ENCODE measurements at regions of chrX and their contacts with region 1.

Region 1: GRCh38 chrX:129540068-129540653 is at the start of gene OCRL:
- DNase-seq: no peak
- H3K4me3 ChIP-seq: peak within 1 kb of the TSS; percentile 53
- CTCF ChIP-seq: peak; percentile 68

Region 2: GRCh38 chrX:129433461-129433860 is 106.7 kb before region 1 on chrX:
- in situ Hi-C with region 1: no loop called
- DNase-seq: no peak
- H3K4me3 ChIP-seq: no peak overlapping the region
- CTCF ChIP-seq: no peak

Region 3: DNA sequence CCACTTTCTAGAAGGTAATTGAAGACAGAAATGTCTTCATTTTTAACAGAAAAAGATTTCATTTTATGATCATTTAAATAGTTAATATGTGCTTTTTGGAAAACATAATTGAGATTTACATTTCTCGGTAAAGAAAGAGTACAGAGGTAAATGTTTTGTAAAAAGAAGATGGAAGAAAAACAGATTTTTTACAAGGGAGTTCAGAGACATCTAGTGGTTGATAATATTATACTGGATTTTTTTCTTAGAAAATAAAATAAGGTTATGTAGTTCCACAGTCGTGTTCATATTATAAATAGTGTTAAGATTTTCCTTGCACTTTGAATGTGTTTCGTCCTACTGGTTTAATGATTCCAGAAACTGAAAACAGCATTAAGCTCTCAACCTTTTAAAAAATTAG is 77.5 kb before region 1 on chrX:
- in situ Hi-C with region 1: loop called (anchors 5 kb)
- DNase-seq: no peak
- H3K4me3 ChIP-seq: no peak overlapping the region
- CTCF ChIP-seq: no peak